ENCODE measurements at regions of chr10 and their contacts with region 1.

Region 1: GRCh38 chr10:119725828-119726675 is at the start of gene INPP5F:
- DNase-seq: peak; percentile 96
- ATAC-seq: peak; percentile 92
- H3K4me3 Mint-ChIP-seq: peak within 1 kb of the TSS; percentile 92
- H3K27ac Mint-ChIP-seq: peak within 1 kb of the TSS; percentile 81
- H3K4me1 Mint-ChIP-seq: peaks cover 57% of the 10 kb centered on the region
- H3K27me3 Mint-ChIP-seq: no peaks in the 10 kb centered on the region
- CTCF ChIP-seq: no peak
- total RNA-seq, gene INPP5F: 45.9 and 53.5 TPM in 2 replicates

Region 2: DNA sequence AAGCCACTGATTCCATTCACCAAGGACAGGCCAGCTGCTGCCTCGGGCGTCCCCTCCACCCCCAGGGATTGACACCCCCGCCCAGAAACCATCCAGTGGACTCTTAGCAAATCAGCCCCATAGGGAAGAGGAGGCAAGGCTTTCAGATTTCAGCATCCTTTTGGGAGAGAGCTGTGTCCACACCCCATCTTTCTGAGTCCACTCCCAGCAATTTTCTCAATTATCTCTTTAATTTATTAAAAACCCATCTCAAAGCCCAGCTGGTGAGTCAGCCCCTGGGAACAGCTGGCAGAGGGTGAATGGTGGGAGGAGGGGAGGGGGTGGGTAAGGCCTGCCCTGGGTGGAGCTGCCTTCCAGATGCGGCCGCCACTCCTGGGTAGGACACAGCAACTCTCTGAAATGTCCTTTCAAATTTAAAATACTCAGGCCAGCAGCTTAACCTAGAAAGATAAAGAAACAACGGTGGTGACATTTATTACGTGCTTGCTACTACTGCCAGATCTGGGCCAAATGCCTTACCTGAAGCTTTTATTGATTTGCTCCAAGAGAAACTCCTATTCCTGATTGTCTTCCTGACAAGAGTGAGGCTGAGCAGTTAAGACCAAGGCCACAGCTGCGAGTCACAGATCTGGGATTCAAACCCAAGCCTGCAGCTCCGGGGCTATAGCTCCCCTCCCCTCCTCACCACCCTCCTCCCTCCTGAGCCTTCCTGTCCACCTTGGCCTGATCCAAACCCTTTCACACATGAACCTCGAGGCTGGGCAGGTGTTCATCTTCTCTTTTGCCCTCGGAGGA is 304.0 kb before region 1 on chr10:
- CTCF ChIA-PET with region 1: no interaction called
- POLR2A ChIA-PET with region 1: no interaction called
- intact Hi-C with region 1: no loop called
- DNase-seq: no peak
- ATAC-seq: no peak
- H3K4me3 Mint-ChIP-seq: no peak overlapping the region
- H3K27ac Mint-ChIP-seq: no peak overlapping the region
- H3K4me1 Mint-ChIP-seq: peaks cover 2% of the 10 kb centered on the region
- H3K27me3 Mint-ChIP-seq: no peaks in the 10 kb centered on the region
- CTCF ChIP-seq: no peak

Region 3: GRCh38 chr10:119650692-119651513 is 75.1 kb before region 1 on chr10 and contains the start of gene BAG3:
- CTCF ChIA-PET with region 1: no interaction called
- POLR2A ChIA-PET with region 1: interaction called, 5 read pairs
- intact Hi-C with region 1: loop called (anchors 1 kb)
- DNase-seq: peak; percentile 73
- ATAC-seq: peak; percentile 93
- H3K4me3 Mint-ChIP-seq: peak within 1 kb of the TSS; percentile 97
- H3K27ac Mint-ChIP-seq: peak within 1 kb of the TSS; percentile 95
- H3K4me1 Mint-ChIP-seq: peaks cover 16% of the 10 kb centered on the region
- H3K27me3 Mint-ChIP-seq: no peaks in the 10 kb centered on the region
- CTCF ChIP-seq: no peak
- total RNA-seq, gene BAG3: 4.3 and 4.7 TPM in 2 replicates

Region 4: DNA sequence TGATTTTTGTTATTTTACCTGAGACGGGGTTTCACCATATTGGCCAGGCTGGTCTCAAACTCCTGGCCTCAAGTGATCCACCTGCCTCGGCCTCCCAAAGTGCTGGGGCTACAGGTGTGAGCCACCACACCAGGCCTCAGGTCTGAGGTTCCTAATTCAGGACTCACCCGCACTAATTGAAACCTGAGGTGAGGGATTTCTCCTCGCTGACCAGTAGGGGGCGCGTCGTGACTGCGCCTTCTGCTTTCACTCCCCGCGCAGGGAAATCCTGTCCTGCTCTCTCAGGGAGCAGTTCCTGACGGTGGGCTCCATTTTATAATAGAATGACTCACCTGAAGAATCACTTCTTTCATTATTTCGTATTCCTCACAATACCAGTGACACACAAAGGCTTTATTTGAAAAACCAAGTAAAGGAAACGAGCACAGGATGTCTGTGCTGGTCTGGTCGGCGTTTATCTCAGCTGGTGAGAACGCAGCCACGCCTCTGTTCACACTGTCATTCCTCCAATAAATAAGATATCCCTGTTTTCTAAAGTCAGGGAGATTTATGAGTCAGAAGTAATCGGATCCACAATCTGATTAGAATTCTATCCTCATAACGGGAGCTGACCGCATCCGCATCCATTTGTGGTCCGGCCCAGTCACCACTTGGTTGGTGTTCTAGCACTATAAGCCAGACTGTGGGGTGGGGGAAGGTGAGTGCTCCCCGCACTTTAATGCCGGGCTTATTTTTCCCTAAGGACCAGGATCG is 39.4 kb before region 1 on chr10:
- CTCF ChIA-PET with region 1: interaction called, 39 read pairs
- POLR2A ChIA-PET with region 1: interaction called, 33 read pairs
- intact Hi-C with region 1: loop called (anchors 1 kb)
- DNase-seq: peak; percentile 68
- ATAC-seq: peak; percentile 93
- H3K4me3 Mint-ChIP-seq: peak overlapping the region; percentile 71
- H3K27ac Mint-ChIP-seq: peak overlapping the region; percentile 77
- H3K4me1 Mint-ChIP-seq: peaks cover 28% of the 10 kb centered on the region
- H3K27me3 Mint-ChIP-seq: peaks cover 3% of the 10 kb centered on the region
- CTCF ChIP-seq: peak; percentile 93

Region 5: DNA sequence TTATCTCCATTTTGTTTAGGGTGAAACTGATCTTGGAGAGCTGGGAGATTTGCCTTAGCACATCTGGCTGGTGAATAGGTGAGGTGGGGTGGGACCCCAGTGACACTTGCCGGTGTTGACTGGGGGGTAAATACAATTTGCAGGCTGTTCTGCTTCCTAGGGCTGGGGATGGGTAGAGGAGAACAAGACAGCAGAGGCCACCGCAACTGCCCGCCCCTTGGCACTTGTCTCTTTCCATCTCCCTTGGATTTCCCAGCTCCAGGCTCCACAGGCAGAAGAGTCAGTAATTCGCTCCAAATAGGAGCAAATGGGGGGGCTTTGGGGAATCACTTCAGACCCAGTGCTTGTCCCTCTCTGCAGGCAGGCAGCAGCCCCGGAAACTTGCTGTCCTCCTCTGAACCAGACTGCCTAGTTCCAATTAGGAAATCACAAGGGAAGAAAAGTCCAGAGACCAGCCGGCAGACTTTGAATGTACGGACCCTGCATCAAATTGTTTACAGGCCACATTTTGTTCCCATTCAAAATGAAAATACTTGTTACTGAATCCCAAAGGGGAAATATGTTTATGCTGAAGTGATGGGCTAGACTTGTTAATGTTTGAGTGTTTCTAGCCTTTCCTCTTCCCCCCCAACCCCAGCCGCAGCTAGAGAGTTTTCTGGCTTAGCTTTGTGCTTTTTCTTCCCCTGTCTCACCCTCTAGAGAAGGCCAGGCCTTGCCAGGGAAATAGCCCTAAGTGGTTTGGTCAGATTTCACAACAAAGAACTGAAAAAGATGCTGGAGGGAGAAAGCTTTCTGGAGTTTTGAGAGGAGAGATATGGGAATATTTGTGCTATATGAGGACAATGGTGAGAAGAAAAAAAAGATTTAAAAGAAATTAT is 10.2 kb before region 1 on chr10:
- CTCF ChIA-PET with region 1: no interaction called
- POLR2A ChIA-PET with region 1: interaction called, 40 read pairs
- intact Hi-C with region 1: no loop called
- DNase-seq: no peak
- ATAC-seq: no peak
- H3K4me3 Mint-ChIP-seq: no peak overlapping the region
- H3K27ac Mint-ChIP-seq: peak overlapping the region; percentile 56
- H3K4me1 Mint-ChIP-seq: peaks cover 20% of the 10 kb centered on the region
- H3K27me3 Mint-ChIP-seq: no peaks in the 10 kb centered on the region
- CTCF ChIP-seq: no peak

Region 6: DNA sequence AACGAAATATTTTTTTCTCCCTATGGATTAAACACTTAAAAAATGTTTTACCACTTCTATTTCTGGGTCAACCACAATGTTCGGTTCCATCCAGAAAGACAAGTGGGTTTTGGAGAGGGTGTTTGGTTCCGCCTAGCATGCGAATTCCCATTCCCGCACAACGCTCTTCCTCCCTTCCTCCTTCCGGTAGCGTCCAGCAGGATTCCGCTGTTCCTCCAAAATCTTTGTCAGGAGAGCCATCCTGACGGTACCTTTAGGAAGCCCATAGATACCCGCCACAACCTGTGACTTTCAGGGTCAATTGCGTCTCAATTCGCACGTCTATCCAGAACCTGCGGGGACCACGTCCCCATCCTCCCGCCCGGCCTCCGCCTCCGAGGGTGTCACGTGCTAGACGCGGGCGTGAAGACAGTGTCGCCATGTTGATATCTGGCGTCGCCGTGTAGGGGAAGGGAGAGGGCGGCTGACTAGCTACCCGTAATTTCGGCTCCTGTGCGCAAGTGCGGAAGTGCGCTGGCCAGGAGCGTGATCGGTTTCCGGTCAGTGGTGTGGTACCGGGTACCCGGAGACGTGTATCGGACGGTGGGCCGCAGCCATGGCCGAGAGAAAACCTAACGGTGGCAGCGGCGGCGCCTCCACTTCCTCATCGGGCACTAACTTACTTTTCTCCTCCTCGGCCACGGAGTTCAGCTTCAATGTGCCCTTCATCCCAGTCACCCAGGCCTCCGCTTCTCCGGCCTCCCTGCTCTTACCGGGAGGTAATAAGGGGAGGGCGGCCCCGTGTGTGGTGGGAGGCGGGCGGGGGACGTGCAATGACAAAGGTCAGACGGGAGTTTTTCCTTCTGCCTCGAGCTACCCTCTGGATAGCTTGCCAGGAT is 166.4 kb after region 1 on chr10 and contains the start of gene SEC23IP:
- CTCF ChIA-PET with region 1: no interaction called
- POLR2A ChIA-PET with region 1: interaction called, 6 read pairs
- intact Hi-C with region 1: loop called (anchors 1 kb)
- DNase-seq: peak; percentile 84
- ATAC-seq: peak; percentile 98
- H3K4me3 Mint-ChIP-seq: peak within 1 kb of the TSS; percentile 94
- H3K27ac Mint-ChIP-seq: peak within 1 kb of the TSS; percentile 95
- H3K4me1 Mint-ChIP-seq: peaks cover 42% of the 10 kb centered on the region
- H3K27me3 Mint-ChIP-seq: no peaks in the 10 kb centered on the region
- CTCF ChIP-seq: no peak
- total RNA-seq, gene SEC23IP: 73.8 and 79.9 TPM in 2 replicates